B cell (primary cell): ENCODE measurements at regions of chr14 and their contacts with region 1.

Region 1: GRCh38 chr14:76956316-76957090 is 72.0 kb downstream of the IRF2BPL start:
- DNase-seq: peak; percentile 87
- ATAC-seq: peak; percentile 70
- H3K4me3 ChIP-seq: peak overlapping the region; percentile 23 to 64 (median 59)
- H3K4me3 Mint-ChIP-seq: peak overlapping the region; percentile 95
- H3K27ac ChIP-seq: peak overlapping the region; percentile 89 to 94
- H3K27ac Mint-ChIP-seq: peak overlapping the region; percentile 99
- H3K4me1 ChIP-seq: peaks cover 50 to 75% of the 10 kb centered on the region in 2 donors
- H3K4me1 Mint-ChIP-seq: peaks cover 65% of the 10 kb centered on the region
- H3K27me3 ChIP-seq: no peaks in the 10 kb centered on the region
- H3K27me3 Mint-ChIP-seq: no peaks in the 10 kb centered on the region
- CTCF ChIP-seq: no peak

Region 2: GRCh38 chr14:76918751-76919543 is 37.6 kb before region 1 on chr14:
- CTCF ChIA-PET with region 1: interaction called, 21 read pairs
- POLR2A ChIA-PET with region 1: interaction called, 3 read pairs
- intact Hi-C with region 1: no loop called
- DNase-seq: no peak
- ATAC-seq: no peak
- H3K4me3 ChIP-seq: no peak overlapping the region
- H3K4me3 Mint-ChIP-seq: no peak overlapping the region
- H3K27ac ChIP-seq: no peak overlapping the region
- H3K27ac Mint-ChIP-seq: no peak overlapping the region
- H3K4me1 ChIP-seq: peaks cover 24 to 25% of the 10 kb centered on the region in 2 donors
- H3K4me1 Mint-ChIP-seq: peaks cover 20% of the 10 kb centered on the region
- H3K27me3 ChIP-seq: peaks cover 0 to 33% (median 5%) of the 10 kb centered on the region in 4 experiments
- H3K27me3 Mint-ChIP-seq: peaks cover 22% of the 10 kb centered on the region
- CTCF ChIP-seq: no peak

Region 3: DNA sequence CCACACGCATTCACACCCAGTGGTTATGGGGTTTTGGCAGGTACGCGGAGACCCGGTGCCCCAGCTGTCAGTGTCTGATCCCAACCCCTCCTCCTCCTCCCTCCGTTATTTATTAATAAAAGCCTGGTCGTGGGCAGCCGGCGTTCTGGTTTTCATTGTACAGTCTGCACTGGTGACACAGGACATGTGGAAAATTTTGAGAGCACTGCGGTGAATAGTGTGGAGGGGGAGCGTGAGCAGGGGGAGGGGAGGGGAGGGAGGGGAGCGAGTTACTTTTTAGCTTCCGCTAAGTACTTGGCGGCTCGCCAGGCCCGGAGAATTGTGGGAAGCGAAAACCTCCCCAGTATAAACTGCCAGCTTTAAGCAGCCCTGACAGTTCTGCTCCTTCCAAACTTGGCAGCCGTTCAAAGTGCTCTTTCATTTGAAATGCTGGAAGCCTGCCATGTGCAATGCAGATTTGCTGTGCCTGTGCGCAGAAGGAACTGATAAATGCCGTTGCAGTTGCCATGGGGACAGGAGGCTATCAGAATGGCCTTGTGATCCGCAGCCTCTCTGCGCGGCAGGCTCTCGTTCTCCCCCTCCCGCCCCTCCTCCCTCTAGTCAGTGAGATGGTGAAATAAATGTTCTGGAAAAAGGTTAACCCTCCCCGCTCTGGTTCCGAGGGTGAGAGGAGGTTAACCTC is 83.7 kb after region 1 on chr14:
- CTCF ChIA-PET with region 1: interaction called, 14 read pairs
- POLR2A ChIA-PET with region 1: interaction called, 13 read pairs
- intact Hi-C with region 1: loop called (anchors 1 kb)
- DNase-seq: peak; percentile 94
- ATAC-seq: peak; percentile 72
- H3K4me3 ChIP-seq: peak overlapping the region; percentile 11 to 70 (median 56)
- H3K4me3 Mint-ChIP-seq: peak overlapping the region; percentile 88
- H3K27ac ChIP-seq: peak overlapping the region; percentile 89 to 93
- H3K27ac Mint-ChIP-seq: peak overlapping the region; percentile 98
- H3K4me1 ChIP-seq: peaks cover 71 to 86% of the 10 kb centered on the region in 2 donors
- H3K4me1 Mint-ChIP-seq: peaks cover 79% of the 10 kb centered on the region
- H3K27me3 ChIP-seq: no peaks in the 10 kb centered on the region
- H3K27me3 Mint-ChIP-seq: no peaks in the 10 kb centered on the region
- CTCF ChIP-seq: no peak